WTC11 (cell line): ENCODE measurements at regions of chr15 and their contacts with region 1.

Region 1: DNA sequence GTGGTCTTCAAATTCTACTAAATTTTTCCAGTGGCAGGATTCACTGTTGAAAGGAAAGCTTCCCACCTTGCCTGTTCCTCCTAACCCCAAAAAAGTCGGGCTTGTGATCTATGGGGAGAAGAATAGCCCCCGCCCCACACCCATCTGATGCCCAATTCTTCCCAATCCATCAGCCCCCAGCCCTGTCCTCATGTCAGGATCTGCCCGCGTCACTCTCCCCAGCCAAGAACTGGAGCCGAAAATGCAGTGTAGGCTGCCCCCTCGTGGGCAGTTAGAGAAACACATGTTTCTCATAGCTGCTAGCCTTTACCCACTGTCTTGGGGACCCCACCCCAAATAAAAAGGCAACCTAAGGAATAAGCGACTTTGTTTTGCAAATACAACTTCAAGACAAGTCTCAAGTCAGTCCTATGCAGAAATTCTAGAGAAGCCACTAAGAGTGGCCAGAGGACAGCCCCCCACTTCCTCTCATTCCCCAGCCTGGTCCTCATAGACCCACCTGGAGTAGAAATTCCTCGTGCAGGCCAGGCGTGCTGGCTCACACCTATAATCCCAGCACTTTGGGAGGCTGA is 13.0 kb upstream of the CSK start:
- DNase-seq: peak; percentile 81
- ATAC-seq: peak; percentile 58
- H3K4me3 Mint-ChIP-seq: peak overlapping the region; percentile 58
- H3K27ac Mint-ChIP-seq: no peak overlapping the region
- H3K4me1 Mint-ChIP-seq: peaks cover 23% of the 10 kb centered on the region
- H3K27me3 Mint-ChIP-seq: peaks cover 21% of the 10 kb centered on the region
- CTCF ChIP-seq: peak; percentile 90

Region 2: GRCh38 chr15:74615508-74616365 is 153.1 kb before region 1 on chr15 and contains the start of gene CLK3:
- CTCF ChIA-PET with region 1: interaction called, 78 read pairs
- POLR2A ChIA-PET with region 1: interaction called, 3 read pairs
- DNase-seq: peak; percentile 99
- ATAC-seq: peak; percentile 92
- H3K4me3 Mint-ChIP-seq: peak within 1 kb of the TSS; percentile 86
- H3K27ac Mint-ChIP-seq: peak within 1 kb of the TSS; percentile 95
- H3K4me1 Mint-ChIP-seq: peaks cover 17% of the 10 kb centered on the region
- H3K27me3 Mint-ChIP-seq: peaks cover 22% of the 10 kb centered on the region
- CTCF ChIP-seq: no peak
- total RNA-seq, gene CLK3: 45.2 to 48.1 TPM (median 46.3 TPM) in 3 replicates

Region 3: DNA sequence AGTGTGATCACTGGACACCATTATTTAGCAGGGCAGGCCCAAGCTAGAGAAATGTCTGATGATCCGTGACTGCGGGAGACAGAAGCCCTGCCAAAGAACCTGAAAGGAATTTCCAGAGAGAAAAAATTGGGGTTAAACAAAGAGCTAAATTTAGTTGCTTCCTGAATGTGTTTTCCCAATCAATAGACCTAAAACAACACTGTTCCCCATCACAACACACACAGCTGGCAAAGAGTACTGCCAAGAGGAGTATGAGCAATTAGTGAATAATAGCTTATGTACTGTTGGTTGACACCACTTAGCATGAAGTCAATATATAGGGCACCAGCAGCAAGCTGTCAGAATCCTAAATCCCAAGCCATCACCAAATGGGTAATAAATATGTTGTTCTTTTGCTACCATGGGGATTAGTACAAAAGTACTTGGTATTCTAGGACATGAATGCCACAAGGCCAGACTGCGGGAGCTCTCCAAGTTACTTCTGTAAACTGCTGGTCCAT is 117.6 kb before region 1 on chr15:
- CTCF ChIA-PET with region 1: interaction called, 22 read pairs
- POLR2A ChIA-PET with region 1: no interaction called
- DNase-seq: no peak
- ATAC-seq: no peak
- H3K4me3 Mint-ChIP-seq: no peak overlapping the region
- H3K27ac Mint-ChIP-seq: no peak overlapping the region
- H3K4me1 Mint-ChIP-seq: no peaks in the 10 kb centered on the region
- H3K27me3 Mint-ChIP-seq: no peaks in the 10 kb centered on the region
- CTCF ChIP-seq: no peak

Region 4: DNA sequence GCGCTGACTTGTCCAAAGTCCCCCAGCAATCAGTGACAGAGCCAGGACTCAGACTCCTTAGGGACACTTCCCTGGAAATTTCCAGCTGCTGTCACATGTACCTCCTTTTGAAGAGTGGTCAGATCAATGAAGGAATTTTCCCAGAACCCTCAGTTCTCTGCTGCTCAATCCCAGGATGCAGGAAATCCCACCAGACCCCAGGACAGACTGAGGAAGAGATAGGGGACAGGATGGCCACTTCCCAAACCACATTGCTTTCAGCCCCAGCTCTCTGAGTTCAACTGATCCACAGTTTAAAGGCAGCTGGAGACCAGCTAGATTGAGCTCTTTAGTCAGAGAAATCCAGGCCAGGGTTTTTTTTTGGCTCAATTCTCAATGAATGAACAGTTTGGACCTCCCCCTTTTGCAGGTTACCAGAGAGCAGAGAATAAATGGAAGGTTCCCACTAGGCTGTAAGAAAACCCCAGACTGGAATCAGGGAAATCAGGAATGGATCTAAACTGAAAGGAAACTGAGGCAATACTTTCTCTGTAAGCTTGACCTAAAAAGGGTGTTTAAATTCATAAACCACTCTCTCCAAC is 45.0 kb before region 1 on chr15:
- CTCF ChIA-PET with region 1: interaction called, 53 read pairs
- POLR2A ChIA-PET with region 1: no interaction called
- DNase-seq: no peak
- ATAC-seq: peak; percentile 69
- H3K4me3 Mint-ChIP-seq: no peak overlapping the region
- H3K27ac Mint-ChIP-seq: no peak overlapping the region
- H3K4me1 Mint-ChIP-seq: peaks cover 15% of the 10 kb centered on the region
- H3K27me3 Mint-ChIP-seq: peaks cover 65% of the 10 kb centered on the region
- CTCF ChIP-seq: no peak

Region 5: DNA sequence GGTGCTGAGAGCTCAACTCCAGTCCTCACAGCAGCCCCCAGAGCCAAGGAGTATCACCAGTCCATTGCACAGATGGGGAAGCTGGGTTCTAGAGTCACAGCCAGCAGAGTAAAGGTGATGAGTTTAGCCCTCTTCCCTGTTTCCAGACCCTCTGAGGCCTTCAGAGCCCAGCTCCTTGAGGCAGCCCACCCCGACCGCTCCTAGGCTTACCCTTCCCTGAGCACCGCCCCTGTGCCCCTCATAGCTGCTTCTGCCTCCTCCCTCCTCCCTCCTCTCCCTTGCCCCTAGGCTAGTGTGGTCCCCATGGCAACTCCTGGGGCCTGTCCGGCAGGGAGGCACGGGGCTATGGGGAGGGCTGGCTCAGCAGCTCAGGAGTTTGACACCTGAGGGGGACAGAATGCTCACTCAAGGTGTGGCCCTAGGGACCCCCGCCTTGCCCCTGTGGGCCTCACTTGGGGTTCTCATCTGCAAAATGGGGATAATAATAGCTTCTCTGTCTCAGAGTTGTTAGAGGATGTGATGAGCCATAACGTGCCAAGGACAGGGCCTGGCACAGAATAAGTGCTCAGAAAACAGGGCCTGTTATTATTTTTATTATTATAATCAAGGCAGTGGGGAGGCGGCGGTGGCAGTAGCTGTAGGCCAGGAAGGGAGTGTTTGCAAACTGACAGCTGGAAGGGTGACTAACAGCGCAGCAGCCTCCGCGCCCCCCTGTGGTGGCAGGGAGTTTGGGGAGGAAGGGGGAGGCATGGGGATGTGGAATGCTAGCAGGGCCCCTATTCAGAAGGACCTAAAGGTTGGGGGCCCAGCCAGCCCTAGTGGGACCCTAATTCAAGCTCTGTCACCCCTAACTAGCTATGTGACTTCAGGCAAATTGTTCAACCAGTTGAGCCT is 24.5 kb after region 1 on chr15:
- CTCF ChIA-PET with region 1: interaction called, 360 read pairs
- POLR2A ChIA-PET with region 1: no interaction called
- DNase-seq: no peak
- ATAC-seq: peak; percentile 40
- H3K4me3 Mint-ChIP-seq: no peak overlapping the region
- H3K27ac Mint-ChIP-seq: no peak overlapping the region
- H3K4me1 Mint-ChIP-seq: peaks cover 31% of the 10 kb centered on the region
- H3K27me3 Mint-ChIP-seq: no peaks in the 10 kb centered on the region; the same call in 1 of the 2 replicates
- CTCF ChIP-seq: no peak

Region 6: DNA sequence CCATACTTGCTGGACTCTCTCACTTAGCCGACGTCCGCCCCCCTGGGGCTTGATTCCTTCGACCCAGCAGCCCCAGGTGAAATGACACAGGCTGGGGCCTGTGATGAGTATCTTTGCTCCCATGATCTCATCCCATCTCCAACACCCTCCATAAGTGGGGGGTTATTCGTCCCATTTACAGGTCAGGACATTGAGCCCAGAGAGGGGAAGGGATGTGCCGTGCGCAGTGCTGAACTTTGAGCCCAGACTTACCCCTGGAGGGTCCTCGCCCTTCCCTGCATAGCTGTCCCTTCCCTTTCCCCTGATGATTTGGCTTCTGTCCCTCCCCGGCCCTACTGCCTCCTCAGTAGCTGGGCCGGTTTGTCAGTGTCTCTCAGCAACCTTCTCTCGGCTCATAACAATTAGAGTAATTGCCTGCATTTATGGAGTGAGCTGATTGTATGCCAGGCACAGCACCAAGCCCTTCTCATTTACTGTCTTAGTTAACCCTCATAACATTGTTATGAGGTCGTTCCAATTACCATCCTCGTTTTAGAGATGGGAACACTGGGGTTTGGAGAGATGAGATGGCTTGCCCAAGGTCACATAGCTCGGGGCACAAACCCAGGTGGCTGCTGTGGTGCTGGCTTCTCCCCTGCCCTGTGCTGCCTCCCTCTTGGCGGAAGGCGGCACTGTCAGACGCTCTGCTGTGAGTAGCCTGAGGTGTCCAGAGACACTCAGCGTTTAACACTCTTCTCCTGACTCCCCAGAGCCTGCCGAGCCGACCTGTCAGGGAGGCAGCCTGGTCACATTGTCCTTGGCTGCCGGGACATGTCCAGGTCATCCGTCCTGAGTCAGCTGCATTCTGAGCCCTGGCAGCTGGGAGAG is 48.2 kb after region 1 on chr15:
- CTCF ChIA-PET with region 1: interaction called, 14 read pairs
- POLR2A ChIA-PET with region 1: no interaction called
- DNase-seq: no peak
- ATAC-seq: peak; percentile 61
- H3K4me3 Mint-ChIP-seq: no peak overlapping the region
- H3K27ac Mint-ChIP-seq: peak overlapping the region; percentile 79
- H3K4me1 Mint-ChIP-seq: peaks cover 20% of the 10 kb centered on the region
- H3K27me3 Mint-ChIP-seq: no peaks in the 10 kb centered on the region; the same call in 1 of the 2 replicates
- CTCF ChIP-seq: no peak

Region 7: DNA sequence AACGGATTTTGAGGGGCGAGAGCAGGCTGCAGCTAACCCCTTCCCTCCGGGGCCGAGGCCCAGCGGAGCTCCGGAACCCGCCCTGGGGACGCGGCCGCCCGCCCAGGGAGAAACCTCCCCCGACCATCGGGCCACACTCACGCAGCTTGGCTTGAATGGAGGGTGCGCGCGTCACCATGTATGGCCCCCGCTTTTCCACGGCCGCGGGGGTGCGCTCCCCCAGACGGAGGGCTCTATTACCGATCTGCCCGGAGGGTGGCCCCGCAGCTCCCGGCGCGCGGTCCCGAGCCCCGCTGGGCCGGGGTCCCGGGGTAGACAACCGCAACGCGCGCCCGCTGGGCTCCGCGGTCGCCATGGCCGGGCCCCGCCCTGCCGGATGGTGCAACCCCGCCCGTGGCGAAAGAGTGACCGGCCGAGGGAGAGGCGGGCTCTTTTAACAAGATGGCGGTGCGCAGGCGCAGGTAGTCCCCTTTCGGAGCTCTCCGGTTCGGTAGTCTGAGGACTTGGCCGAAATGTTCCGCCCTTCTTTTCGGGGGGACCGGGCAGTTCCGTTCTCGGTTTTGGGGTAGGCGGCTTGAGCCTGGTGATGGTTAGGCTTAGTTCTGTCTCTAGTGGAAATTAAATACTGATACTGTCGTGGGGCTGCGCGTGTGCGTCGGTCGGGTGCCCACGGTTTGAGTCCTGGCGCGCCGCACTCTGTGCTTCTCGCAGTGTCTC is 137.7 kb after region 1 on chr15 and contains the start of gene FAM219B:
- CTCF ChIA-PET with region 1: interaction called, 50 read pairs
- POLR2A ChIA-PET with region 1: no interaction called
- DNase-seq: peak; percentile 93
- ATAC-seq: peak; percentile 90
- H3K4me3 Mint-ChIP-seq: peak within 1 kb of the TSS; percentile 94
- H3K27ac Mint-ChIP-seq: peak within 1 kb of the TSS; percentile 94
- H3K4me1 Mint-ChIP-seq: peaks cover 15% of the 10 kb centered on the region
- H3K27me3 Mint-ChIP-seq: no peaks in the 10 kb centered on the region
- CTCF ChIP-seq: no peak
- total RNA-seq, gene FAM219B: 67.3 to 99.6 TPM (median 87.8 TPM) in 3 replicates